Caco-2 (cell line): ENCODE measurements at regions of chr1 and their contacts with region 1.

Region 1: GRCh38 chr1:108125312-108126138 is 74.6 kb downstream of the SLC25A24 start:
- DNase-seq: peak; percentile 59 to 66
- H3K4me3 ChIP-seq: no peak overlapping the region
- H3K4me3 Mint-ChIP-seq: no peak overlapping the region
- H3K27ac Mint-ChIP-seq: no peak overlapping the region
- H3K4me1 ChIP-seq: no peaks in the 10 kb centered on the region
- H3K4me1 Mint-ChIP-seq: no peaks in the 10 kb centered on the region
- H3K27me3 ChIP-seq: no peaks in the 10 kb centered on the region
- H3K27me3 Mint-ChIP-seq: peaks cover 4% of the 10 kb centered on the region
- CTCF ChIP-seq: peak; percentile 74 to 76

Region 2: DNA sequence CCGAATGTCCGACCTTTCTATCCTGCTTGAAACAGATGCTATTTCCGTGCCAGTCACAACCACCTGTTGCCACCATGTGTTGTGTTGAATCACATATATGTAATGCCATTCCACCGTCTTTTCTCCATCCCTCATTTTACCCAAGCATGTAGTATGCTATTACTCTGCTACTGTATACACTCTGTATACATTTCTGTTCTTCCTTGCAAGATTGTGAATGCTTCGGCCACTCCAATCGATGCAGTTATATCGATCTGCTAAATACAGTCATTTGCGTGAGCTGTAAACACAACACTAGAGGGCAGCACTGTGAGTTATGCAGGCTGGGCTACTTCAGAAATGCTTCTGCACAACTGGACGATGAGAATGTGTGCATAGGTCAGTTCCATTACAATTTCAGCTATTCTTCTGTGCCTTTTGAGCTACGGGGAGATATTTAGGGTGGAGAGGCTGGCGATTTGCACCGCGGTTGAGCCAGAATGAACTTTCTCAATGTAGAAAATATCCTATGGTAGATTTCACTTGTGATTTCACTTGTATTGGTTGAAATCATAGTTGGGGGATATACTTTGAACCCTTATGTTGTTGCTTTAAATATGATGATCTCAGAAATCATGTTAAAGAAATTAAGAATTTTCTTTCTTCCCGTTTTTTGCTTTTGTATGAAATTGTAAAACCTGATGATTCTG is 694.8 kb before region 1 on chr1:
- CTCF ChIA-PET with region 1: no interaction called
- POLR2A ChIA-PET with region 1: no interaction called
- intact Hi-C with region 1: loop called (anchors 2 kb)
- DNase-seq: peak; percentile 33 to 44
- H3K4me3 ChIP-seq: no peak overlapping the region
- H3K4me3 Mint-ChIP-seq: no peak overlapping the region
- H3K27ac Mint-ChIP-seq: no peak overlapping the region
- H3K4me1 ChIP-seq: no peaks in the 10 kb centered on the region
- H3K4me1 Mint-ChIP-seq: peaks cover 6% of the 10 kb centered on the region
- H3K27me3 ChIP-seq: no peaks in the 10 kb centered on the region
- H3K27me3 Mint-ChIP-seq: peaks cover 2% of the 10 kb centered on the region
- CTCF ChIP-seq: peak; percentile 63 to 72

Region 3: GRCh38 chr1:107782217-107782845 is 343.2 kb before region 1 on chr1:
- CTCF ChIA-PET with region 1: interaction called, 59 read pairs
- POLR2A ChIA-PET with region 1: no interaction called
- intact Hi-C with region 1: loop called (anchors 1 kb)
- DNase-seq: peak in 1 of 2 experiments; percentile 45
- H3K4me3 ChIP-seq: no peak overlapping the region
- H3K4me3 Mint-ChIP-seq: no peak overlapping the region
- H3K27ac Mint-ChIP-seq: no peak overlapping the region
- H3K4me1 ChIP-seq: no peaks in the 10 kb centered on the region
- H3K4me1 Mint-ChIP-seq: no peaks in the 10 kb centered on the region
- H3K27me3 ChIP-seq: no peaks in the 10 kb centered on the region
- H3K27me3 Mint-ChIP-seq: no peaks in the 10 kb centered on the region
- CTCF ChIP-seq: peak; percentile 36 to 57

Region 4: GRCh38 chr1:107897438-107898345 is 227.8 kb before region 1 on chr1:
- CTCF ChIA-PET with region 1: interaction called, 3 read pairs
- POLR2A ChIA-PET with region 1: no interaction called
- intact Hi-C with region 1: loop called (anchors 5 kb)
- DNase-seq: no peak
- H3K4me3 ChIP-seq: no peak overlapping the region
- H3K4me3 Mint-ChIP-seq: no peak overlapping the region
- H3K27ac Mint-ChIP-seq: no peak overlapping the region
- H3K4me1 ChIP-seq: no peaks in the 10 kb centered on the region
- H3K4me1 Mint-ChIP-seq: no peaks in the 10 kb centered on the region
- H3K27me3 ChIP-seq: no peaks in the 10 kb centered on the region
- H3K27me3 Mint-ChIP-seq: no peaks in the 10 kb centered on the region
- CTCF ChIP-seq: no peak

Region 5: GRCh38 chr1:108045460-108045859 is 80.1 kb before region 1 on chr1:
- CTCF ChIA-PET with region 1: no interaction called
- POLR2A ChIA-PET with region 1: no interaction called
- intact Hi-C with region 1: loop called (anchors 1 kb)
- DNase-seq: peak; percentile 15 to 44
- H3K4me3 ChIP-seq: no peak overlapping the region
- H3K4me3 Mint-ChIP-seq: no peak overlapping the region
- H3K27ac Mint-ChIP-seq: peak overlapping the region; percentile 56
- H3K4me1 ChIP-seq: peaks cover 10% of the 10 kb centered on the region
- H3K4me1 Mint-ChIP-seq: peaks cover 30% of the 10 kb centered on the region
- H3K27me3 ChIP-seq: no peaks in the 10 kb centered on the region
- H3K27me3 Mint-ChIP-seq: no peaks in the 10 kb centered on the region
- CTCF ChIP-seq: no peak